Naive thymus-derived CD8-positive, alpha-beta T cell (primary cell): ENCODE measurements at regions of chr14 and their contacts with region 1.

Region 1: GRCh38 chr14:52695481-52696091 is at the start of gene ERO1A:
- DNase-seq: peak; percentile 14 to 72 (median 56)
- ATAC-seq: peak; percentile 63 to 74
- H3K4me3 Mint-ChIP-seq: peak within 1 kb of the TSS; percentile 94 to 100 (median 98)
- H3K27ac Mint-ChIP-seq: peak within 1 kb of the TSS; percentile 93 to 99 (median 98)
- H3K4me1 Mint-ChIP-seq: peaks cover 23 to 42% (median 41%) of the 10 kb centered on the region in 4 donors
- H3K27me3 Mint-ChIP-seq: no peaks in the 10 kb centered on the region
- polyA plus RNA-seq, gene ERO1A: 29.6 to 32.0 (median 30.2) TPM

Region 2: DNA sequence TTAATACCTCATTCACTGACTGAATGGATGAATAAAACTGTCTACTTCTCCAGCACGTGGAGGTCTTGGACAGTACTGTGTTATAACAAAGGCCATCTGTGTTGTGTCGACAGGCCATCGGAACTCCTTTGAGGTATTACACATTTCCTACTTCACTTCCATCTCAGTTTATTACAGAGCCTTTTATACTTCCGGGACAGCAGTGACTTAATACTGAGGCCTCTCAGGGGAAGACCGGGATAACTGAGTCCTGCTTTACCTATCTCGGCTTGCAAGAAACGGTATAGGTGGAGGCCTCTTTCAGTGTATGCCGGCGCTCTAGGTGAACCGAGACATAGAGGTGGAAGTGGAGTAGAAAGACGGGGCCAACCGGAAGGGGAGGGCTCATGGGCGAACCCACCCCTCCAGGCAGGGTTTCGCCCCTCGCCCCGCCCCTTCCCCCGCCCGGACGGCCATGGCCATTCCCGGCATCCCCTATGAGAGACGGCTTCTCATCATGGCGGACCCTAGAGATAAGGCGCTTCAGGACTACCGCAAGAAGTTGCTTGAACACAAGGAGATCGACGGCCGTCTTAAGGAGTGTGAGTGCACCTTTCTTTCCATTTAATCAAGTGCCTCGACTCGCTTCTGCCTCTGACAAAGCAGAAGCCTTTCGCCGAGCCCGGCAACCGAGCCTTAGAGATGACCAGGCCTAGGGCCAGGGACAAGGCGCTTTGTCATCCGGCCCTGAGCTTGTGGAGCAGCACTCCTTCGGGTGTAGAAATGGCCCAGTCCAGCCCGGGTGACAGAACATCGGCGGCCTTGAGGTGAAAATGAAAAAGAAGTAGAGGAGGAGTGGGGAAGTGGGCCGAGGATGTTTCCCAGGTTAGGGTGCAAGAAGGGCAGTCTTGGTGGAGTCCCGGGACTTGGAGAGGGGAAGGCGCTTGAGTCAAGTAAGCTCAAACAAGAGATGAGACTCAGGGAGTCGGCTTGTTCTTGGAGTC is 11.4 kb after region 1 on chr14 and contains the start of gene PSMC6:
- POLR2A ChIA-PET with region 1: interaction called, 15 read pairs
- DNase-seq: peak; percentile 85 to 97 (median 92)
- ATAC-seq: peak; percentile 96 to 97
- H3K4me3 Mint-ChIP-seq: peak within 1 kb of the TSS; percentile 93 to 99 (median 98)
- H3K27ac Mint-ChIP-seq: peak within 1 kb of the TSS; percentile 95 to 99 (median 97)
- H3K4me1 Mint-ChIP-seq: peaks cover 16 to 41% (median 31%) of the 10 kb centered on the region in 4 donors
- H3K27me3 Mint-ChIP-seq: no peaks in the 10 kb centered on the region
- polyA plus RNA-seq, gene PSMC6: 38.1 to 60.1 (median 52.0) TPM

Region 3: DNA sequence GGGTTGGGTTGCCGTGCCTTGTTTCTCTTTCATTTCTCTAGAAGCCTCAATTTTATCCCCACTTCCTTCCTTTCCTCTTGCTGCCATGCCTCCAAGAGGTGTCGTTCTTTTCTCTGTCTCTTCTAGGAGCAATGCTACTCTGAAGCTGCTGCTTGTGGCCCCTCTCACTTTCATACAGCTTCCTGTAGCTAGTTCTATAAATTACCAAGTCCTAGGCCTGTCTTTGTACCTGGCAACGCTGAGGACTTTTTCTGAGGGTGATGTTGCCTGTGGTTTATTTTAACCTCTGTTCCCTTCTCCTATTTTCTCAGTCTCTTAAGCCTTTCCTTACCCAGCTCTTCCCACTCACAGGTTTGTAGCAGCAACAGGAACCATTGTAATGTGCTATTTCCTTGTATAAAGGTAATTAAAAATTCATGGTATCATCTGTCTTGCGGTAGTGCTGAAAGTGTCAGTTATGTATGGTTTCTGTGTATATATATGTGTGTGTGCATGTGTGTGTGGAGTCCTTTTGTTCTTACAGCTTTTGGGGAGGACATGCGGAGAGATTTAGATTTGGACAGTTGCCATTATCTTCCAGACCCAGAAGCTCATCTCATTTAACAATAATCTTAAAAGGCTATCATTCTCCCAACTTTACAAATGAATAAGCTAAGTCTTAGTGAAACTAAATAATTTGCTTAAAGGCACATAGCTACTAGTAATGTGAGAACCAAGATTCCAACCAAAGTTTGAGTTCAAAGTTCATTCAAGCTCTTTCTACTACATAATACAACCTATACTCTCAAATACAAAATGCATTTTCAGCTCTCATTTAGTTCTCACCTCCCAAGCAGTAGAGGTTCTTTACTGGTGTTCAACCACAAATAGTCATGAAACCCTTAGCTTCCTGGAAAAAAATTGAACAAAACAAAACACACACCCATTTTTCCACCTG is 413.8 kb after region 1 on chr14:
- POLR2A ChIA-PET with region 1: no interaction called
- DNase-seq: peak in 8 of 10 donors; percentile 9 to 61 (median 44)
- ATAC-seq: peak; percentile 71 to 73
- H3K4me3 Mint-ChIP-seq: no peak overlapping the region
- H3K27ac Mint-ChIP-seq: no peak overlapping the region
- H3K4me1 Mint-ChIP-seq: peaks cover 0 to 36% (median 13%) of the 10 kb centered on the region in 4 donors
- H3K27me3 Mint-ChIP-seq: no peaks in the 10 kb centered on the region